AG04449 (cell line): ENCODE measurements at regions of chr18 and their contacts with region 1.

Region 1: DNA sequence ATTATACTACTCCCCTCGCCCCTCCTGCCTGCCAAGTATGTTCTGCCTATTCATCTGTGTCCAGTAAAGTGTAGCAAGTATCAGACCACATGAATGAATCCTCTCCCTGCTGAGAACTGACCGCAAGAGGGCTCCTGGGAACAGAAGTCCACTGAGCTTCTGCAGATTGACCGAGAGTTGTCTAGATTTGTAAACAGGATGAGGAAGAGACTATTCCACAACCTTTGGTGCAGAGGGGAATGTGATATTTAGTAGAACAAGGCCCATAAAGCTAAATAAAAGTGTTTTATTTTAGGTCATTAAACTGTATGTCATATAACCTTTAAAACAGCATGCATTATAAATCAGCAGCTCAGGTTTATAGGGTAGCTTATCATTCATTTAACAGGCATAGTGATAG is 377.0 kb downstream of the DCC start:
- DNase-seq: peak; percentile 17
- H3K4me3 ChIP-seq: no peak overlapping the region
- CTCF ChIP-seq: peak; percentile 51

Region 2: DNA sequence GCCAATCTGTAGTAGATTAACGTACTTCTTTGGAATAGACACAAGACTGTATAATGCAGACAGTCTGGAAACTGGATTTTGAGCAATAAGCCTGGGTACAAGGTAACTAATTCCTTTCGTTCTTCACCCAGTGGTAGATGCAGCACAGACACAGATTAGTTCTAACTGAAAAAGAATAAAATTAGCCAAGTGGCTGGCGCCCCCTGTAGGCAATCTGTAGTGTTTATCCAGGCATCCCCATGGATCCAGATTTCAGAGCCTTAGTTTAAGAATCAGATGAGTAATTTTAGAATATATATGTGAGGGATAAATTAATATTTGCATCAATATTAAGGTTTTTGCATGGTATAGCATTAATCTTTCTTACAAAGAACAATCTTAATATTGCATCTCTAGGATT is 186.9 kb after region 1 on chr18:
- CTCF ChIA-PET with region 1: interaction called, 10 read pairs
- POLR2A ChIA-PET with region 1: no interaction called
- DNase-seq: no peak
- H3K4me3 ChIP-seq: no peak overlapping the region
- CTCF ChIP-seq: peak; percentile 63